K562 (cell line): ENCODE measurements at regions of chr6 and their contacts with region 1.

Region 1: DNA sequence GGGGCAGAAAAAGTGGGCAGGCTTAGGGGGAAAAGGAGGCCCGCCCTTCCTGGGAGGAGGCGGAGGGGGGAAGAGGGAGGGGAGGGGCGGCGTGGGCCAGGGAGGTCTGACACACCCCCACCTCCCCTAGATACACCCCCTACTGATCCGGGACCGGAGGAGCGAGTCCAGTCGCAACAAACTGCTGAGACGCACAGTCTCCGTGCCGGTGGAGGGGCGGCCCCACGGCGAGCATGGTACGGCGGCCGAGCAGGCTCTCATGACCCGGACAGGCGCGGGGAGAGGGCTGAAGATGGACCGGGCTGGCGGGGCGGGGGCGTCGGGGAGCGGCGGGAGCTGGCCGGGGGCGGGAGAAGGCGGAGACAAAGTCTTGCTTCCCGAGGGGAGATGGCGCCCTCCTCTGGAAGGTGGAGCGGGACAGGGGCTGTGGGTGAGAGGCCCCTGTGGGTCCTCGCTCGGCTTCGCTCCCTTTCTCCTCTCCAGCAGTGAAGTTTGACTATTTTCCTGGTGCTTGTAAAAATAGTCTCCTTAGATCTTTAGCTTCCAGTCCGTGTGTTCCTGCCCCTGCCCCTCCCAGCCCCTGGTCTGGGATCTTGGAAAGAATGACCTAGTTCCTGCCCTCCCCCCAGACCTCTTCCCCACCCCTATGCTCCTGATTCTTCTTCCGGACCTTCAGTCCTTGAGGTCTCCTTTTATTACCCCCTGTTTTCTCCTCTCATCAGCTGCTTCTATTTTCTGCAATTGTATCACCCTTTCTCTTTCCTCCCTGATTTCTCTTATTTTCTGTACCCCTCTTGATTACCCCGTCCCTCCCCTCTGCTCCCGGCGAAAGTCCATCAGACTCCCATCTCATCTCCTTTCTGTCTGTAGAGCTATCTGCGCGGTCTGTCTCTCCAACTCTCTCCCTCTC is 6.1 kb downstream of the SYNGAP1 start:
- DNase-seq: peak; percentile 94 to 98 (median 96)
- ATAC-seq: peak; percentile 87
- H3K4me3 ChIP-seq: peak overlapping the region; percentile 57
- H3K27ac ChIP-seq: peak overlapping the region; percentile 95
- H3K4me1 ChIP-seq: peaks cover 43 to 53% of the 10 kb centered on the region in 2 experiments
- H3K27me3 ChIP-seq: no peaks in the 10 kb centered on the region
- CTCF ChIP-seq: peak; percentile 72 to 95 (median 90)
- EP300 ChIP-seq: no peak; the same call in 1 of the 2 replicates
- POLR2A ChIP-seq: peak; percentile 6; the same call in 1 of the 2 replicates
- RAD21 ChIP-seq: peak; percentile 74 to 79

Region 2: DNA sequence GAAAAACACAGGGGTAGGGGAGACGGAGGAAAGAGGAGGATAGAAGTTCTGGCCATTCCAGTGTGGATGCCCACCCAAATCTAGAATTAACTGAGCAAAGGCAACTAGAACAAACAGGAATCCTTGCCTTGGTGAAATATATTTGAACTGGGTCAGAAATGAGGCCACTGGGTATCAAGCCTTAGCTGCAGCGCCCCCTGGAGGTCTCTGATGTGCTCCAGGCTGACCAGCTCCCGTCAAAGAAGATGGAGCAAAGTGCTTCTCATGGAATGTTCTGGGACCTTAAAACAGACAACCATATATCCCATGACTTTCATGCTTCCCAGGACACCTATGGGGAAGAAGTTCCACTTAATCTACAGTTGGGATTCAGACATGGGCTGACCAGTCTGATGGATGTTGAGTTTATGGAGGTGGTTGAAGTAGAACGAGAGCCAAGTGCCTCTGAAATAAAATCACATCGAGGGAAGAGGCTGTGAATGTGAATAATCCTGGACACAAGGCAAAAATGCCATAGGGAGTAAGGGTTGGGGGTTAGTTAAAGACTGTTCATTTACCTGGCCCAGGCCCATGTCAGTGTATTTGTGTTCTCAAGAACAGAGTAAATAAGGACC is 299.7 kb before region 1 on chr6:
- CTCF ChIA-PET with region 1: no interaction called
- POLR2A ChIA-PET with region 1: no interaction called
- in situ Hi-C with region 1: no loop called
- intact Hi-C with region 1: loop called (anchors 10 kb)
- DNase-seq: peak; percentile 75 to 79 (median 77)
- ATAC-seq: peak; percentile 91
- H3K4me3 ChIP-seq: no peak overlapping the region
- H3K27ac ChIP-seq: no peak overlapping the region
- H3K4me1 ChIP-seq: no peaks in the 10 kb centered on the region
- H3K27me3 ChIP-seq: peaks cover 5 to 26% of the 10 kb centered on the region in 2 experiments; a peak in 3 of 5 replicates
- CTCF ChIP-seq: peak; percentile 74 to 90 (median 79)
- EP300 ChIP-seq: no peak
- POLR2A ChIP-seq: no peak
- RAD21 ChIP-seq: peak in 1 of 2 experiments; percentile 41; a peak in 2 of 4 replicates

Region 3: DNA sequence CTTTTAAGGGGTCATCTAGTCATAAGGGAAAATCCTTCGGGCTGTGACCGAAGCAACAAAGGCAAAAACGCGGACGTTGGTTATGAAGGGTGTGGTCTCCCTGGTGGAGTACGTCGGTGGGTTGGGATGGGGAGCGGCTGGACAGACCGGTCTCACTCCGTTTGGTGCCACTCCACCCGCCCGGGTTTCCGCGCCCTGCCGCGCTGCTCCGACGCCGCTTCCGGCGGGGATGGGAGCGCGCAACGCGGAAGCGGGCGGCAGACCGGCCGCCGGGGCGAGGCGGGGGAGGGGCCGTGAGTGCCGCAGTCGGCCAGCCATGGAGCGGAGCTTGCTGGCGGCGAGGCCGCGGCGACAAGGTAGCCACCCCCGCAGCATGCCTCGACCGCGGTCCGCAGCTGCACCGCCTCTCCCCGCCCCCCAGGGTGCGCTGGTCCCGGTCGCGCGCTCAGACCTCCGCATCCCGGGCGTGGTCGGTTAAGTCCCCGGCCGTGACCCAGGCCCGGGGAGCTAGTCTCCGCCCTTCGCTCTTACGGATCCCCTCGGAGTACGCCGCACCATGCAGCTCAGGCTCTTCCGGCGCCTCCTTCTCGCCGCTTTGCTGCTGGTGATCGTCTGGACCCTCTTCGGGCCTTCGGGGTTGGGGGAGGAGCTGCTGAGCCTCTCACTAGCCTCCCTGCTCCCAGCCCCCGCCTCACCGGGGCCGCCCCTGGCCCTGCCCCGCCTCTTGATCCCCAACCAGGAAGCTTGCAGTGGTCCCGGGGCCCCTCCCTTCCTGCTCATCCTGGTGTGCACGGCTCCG is 148.9 kb before region 1 on chr6 and contains the start of gene B3GALT4:
- CTCF ChIA-PET with region 1: interaction called, 16 read pairs
- POLR2A ChIA-PET with region 1: interaction called, 14 read pairs
- in situ Hi-C with region 1: no loop called
- intact Hi-C with region 1: loop called (anchors 1 kb)
- DNase-seq: peak; percentile 90 to 95 (median 92)
- ATAC-seq: peak; percentile 83
- H3K4me3 ChIP-seq: peak within 1 kb of the TSS; percentile 93
- H3K27ac ChIP-seq: peak within 1 kb of the TSS; percentile 98
- H3K4me1 ChIP-seq: peaks cover 39 to 40% of the 10 kb centered on the region in 2 experiments
- H3K27me3 ChIP-seq: no peaks in the 10 kb centered on the region
- CTCF ChIP-seq: peak; percentile 77 to 92 (median 85)
- EP300 ChIP-seq: 0 out of 2 replicates have a peak, but pooled peaks have one; percentile 42
- POLR2A ChIP-seq: peak; percentile 87
- RAD21 ChIP-seq: peak; percentile 50 to 52; a peak in 3 of 4 replicates
- polyA plus RNA-seq, gene B3GALT4: 0.11 TPM in 1 of 2 experiments, not detected in the other

Region 4: GRCh38 chr6:33324125-33324524 is 101.8 kb before region 1 on chr6:
- CTCF ChIA-PET with region 1: no interaction called
- POLR2A ChIA-PET with region 1: no interaction called
- in situ Hi-C with region 1: no loop called
- intact Hi-C with region 1: no loop called
- DNase-seq: no peak
- ATAC-seq: no peak
- H3K4me3 ChIP-seq: peak overlapping the region; percentile 64
- H3K27ac ChIP-seq: no peak overlapping the region; the same call in 2 of the 3 replicates
- H3K4me1 ChIP-seq: peaks cover 32 to 43% of the 10 kb centered on the region in 2 experiments
- H3K27me3 ChIP-seq: no peaks in the 10 kb centered on the region
- CTCF ChIP-seq: no peak
- EP300 ChIP-seq: no peak
- POLR2A ChIP-seq: no peak
- RAD21 ChIP-seq: no peak

Region 5: GRCh38 chr6:33375143-33375671 is 50.7 kb before region 1 on chr6:
- CTCF ChIA-PET with region 1: no interaction called
- POLR2A ChIA-PET with region 1: interaction called, 3 read pairs
- in situ Hi-C with region 1: no loop called
- intact Hi-C with region 1: loop called (anchors 10 kb)
- DNase-seq: no peak
- ATAC-seq: peak; percentile 36
- H3K4me3 ChIP-seq: no peak overlapping the region
- H3K27ac ChIP-seq: peak overlapping the region; percentile 72; the same call in 2 of the 3 replicates
- H3K4me1 ChIP-seq: peaks cover 47 to 54% of the 10 kb centered on the region in 2 experiments
- H3K27me3 ChIP-seq: no peaks in the 10 kb centered on the region
- CTCF ChIP-seq: no peak
- EP300 ChIP-seq: no peak
- POLR2A ChIP-seq: no peak
- RAD21 ChIP-seq: no peak

Region 6: GRCh38 chr6:33439956-33440648 is 14.2 kb after region 1 on chr6:
- CTCF ChIA-PET with region 1: no interaction called
- POLR2A ChIA-PET with region 1: interaction called, 14 read pairs
- in situ Hi-C with region 1: no loop called
- intact Hi-C with region 1: no loop called
- DNase-seq: peak; percentile 66 to 78 (median 74)
- ATAC-seq: peak; percentile 73
- H3K4me3 ChIP-seq: no peak overlapping the region
- H3K27ac ChIP-seq: peak overlapping the region; percentile 53; the same call in 2 of the 3 replicates
- H3K4me1 ChIP-seq: peaks cover 19 to 32% of the 10 kb centered on the region in 2 experiments
- H3K27me3 ChIP-seq: no peaks in the 10 kb centered on the region
- CTCF ChIP-seq: peak in 2 of 3 experiments; percentile 4 to 22; a peak in 1 of 6 replicates
- EP300 ChIP-seq: no peak
- POLR2A ChIP-seq: no peak
- RAD21 ChIP-seq: no peak